WTC11 (cell line): ENCODE measurements at regions of chr1 and their contacts with region 1.

Region 1: GRCh38 chr1:153532769-153533599 is 2.8 kb downstream of the S100A6 start:
- DNase-seq: peak; percentile 94
- ATAC-seq: peak; percentile 85
- H3K4me3 Mint-ChIP-seq: peak overlapping the region; percentile 63
- H3K27ac Mint-ChIP-seq: peak overlapping the region; percentile 85
- H3K4me1 Mint-ChIP-seq: peaks cover 44% of the 10 kb centered on the region
- H3K27me3 Mint-ChIP-seq: peaks cover 37% of the 10 kb centered on the region
- CTCF ChIP-seq: peak; percentile 72

Region 2: DNA sequence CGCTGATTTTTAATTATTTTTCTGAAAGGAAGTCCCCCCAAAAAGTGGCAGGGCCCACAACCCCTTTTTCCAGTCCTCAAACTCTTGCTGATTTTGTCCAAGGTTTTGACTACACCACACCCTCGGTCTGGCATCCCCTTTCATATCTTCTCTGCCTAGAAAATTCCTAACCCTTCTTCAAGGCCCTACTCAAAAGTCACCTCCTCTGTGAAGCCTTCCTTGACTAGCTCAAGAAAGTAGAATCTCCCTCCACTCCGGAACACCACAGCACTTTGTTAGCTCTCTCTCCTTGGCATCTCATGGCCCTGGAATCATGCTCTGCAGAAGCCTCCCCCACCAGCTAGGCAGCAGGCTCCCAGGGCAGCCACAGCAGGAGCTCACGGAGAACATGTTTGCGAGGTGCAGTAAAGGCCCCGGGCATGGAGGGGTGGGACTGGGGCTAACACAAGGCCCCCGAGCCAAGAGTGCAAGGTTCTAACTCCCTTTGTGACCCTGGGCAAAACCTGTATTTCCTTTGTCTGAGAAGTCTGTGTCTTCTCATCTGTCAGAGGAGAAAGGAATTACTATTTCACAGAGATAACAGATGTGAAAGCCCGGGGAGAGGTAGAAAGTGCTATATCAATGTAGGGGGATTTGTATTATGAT is 54.8 kb before region 1 on chr1:
- CTCF ChIA-PET with region 1: no interaction called
- POLR2A ChIA-PET with region 1: no interaction called
- DNase-seq: no peak
- ATAC-seq: no peak
- H3K4me3 Mint-ChIP-seq: no peak overlapping the region
- H3K27ac Mint-ChIP-seq: no peak overlapping the region
- H3K4me1 Mint-ChIP-seq: no peaks in the 10 kb centered on the region
- H3K27me3 Mint-ChIP-seq: peaks cover under 1% of the 10 kb centered on the region; the same call in 1 of the 2 replicates
- CTCF ChIP-seq: no peak

Region 3: GRCh38 chr1:153510984-153511410 is 22.0 kb before region 1 on chr1:
- CTCF ChIA-PET with region 1: interaction called, 55 read pairs
- POLR2A ChIA-PET with region 1: interaction called, 4 read pairs
- DNase-seq: peak; percentile 93
- ATAC-seq: peak; percentile 96
- H3K4me3 Mint-ChIP-seq: no peak overlapping the region
- H3K27ac Mint-ChIP-seq: no peak overlapping the region
- H3K4me1 Mint-ChIP-seq: peaks cover 5% of the 10 kb centered on the region; the same call in 1 of the 2 replicates
- H3K27me3 Mint-ChIP-seq: peaks cover 38% of the 10 kb centered on the region
- CTCF ChIP-seq: peak; percentile 81

Region 4: GRCh38 chr1:153553830-153554541 is 21.0 kb after region 1 on chr1:
- CTCF ChIA-PET with region 1: interaction called, 52 read pairs
- POLR2A ChIA-PET with region 1: interaction called, 7 read pairs
- DNase-seq: no peak
- ATAC-seq: no peak
- H3K4me3 Mint-ChIP-seq: no peak overlapping the region
- H3K27ac Mint-ChIP-seq: no peak overlapping the region
- H3K4me1 Mint-ChIP-seq: peaks cover 20% of the 10 kb centered on the region
- H3K27me3 Mint-ChIP-seq: no peaks in the 10 kb centered on the region; the same call in 1 of the 2 replicates
- CTCF ChIP-seq: no peak

Region 5: DNA sequence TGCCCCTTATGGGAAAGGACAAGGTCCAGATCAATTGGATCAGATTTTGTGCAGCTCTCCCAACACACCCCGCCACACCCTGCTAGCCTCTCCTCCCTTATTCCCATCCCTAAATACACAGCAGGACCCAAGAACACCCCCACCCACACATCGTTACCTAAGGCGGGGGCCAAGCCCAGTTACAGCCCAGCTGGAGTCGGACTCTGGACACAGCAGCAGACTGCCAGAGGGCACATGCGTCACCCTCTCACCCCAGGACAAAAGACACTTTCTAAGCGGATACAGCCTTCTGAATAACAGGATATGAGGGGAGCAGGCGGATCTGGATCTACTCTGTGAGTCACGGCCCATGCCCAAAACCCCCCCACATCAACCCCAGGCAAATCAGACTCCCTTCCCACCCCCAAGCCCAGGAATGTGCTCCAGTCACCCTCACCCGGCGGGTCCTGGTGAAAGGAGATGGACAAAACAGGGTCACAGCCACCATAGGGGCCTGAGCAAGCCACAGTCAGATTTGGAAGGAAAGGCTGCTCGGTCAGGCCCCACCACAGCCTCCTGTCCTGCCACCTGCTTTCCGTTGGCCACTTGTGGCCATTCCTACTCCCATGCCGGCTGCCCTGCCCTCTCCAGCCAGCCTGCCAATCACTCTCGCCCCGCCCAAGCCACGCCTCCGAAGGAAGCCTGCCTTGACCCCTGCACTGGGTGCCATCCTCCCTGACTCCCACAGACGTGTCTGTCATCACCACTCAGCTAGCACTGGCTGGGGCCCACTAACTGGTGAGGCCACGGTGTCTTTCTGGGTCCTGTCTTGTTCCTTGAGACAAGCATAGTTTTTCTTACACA is 76.0 kb after region 1 on chr1:
- CTCF ChIA-PET with region 1: interaction called, 12 read pairs
- POLR2A ChIA-PET with region 1: no interaction called
- DNase-seq: peak; percentile 84
- ATAC-seq: peak; percentile 71
- H3K4me3 Mint-ChIP-seq: peak overlapping the region; percentile 29
- H3K27ac Mint-ChIP-seq: peak overlapping the region; percentile 90; the same call in 1 of the 2 replicates
- H3K4me1 Mint-ChIP-seq: peaks cover 64% of the 10 kb centered on the region
- H3K27me3 Mint-ChIP-seq: no peaks in the 10 kb centered on the region; the same call in 1 of the 2 replicates
- CTCF ChIP-seq: no peak

Region 6: DNA sequence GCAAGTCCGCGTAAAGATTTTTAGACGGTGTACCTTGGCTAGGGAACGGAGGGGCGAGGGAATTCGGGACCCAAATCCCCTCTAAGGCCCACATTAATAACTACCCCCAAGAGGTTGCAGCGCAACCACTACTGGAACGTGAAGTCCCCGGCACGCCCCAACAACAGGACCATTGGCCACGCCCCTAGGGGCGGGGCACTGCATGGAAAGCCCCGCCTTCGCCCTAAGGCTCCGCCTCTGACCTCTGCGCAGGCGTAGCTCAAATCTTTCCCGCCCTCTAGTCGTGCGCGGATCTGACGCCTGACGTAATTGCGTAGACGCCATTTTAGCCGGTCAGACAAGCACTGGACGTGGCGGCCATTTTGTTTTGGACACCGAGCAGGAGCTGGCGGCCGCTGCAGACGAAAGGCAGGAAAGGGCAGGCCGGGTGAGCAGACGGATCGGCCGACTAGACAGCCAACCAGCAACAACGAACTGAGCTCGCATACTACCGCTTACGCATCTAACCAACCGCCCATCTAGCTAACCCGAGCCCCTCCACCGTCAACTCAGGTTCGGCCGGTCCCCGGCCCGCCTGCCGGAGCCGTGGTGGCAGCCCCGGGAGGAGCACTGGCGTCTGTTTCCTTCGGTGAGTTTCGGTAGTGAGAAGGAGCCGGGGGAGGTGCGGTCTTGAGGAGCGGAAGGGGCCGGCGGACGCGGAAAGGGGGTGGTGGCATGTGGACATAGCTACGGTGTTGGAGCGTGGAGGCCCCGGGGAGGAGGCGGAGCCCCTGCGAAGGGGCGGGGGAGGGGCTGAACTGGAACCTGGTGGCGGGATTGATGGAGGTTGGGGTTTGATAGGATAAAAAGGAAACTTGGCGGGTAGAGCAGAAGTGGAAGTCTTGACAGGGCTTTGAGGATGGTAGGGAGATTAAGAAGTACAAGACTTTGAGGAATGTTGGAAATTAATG is 101.0 kb after region 1 on chr1 and contains the start of gene CHTOP:
- CTCF ChIA-PET with region 1: interaction called, 131 read pairs
- POLR2A ChIA-PET with region 1: no interaction called
- DNase-seq: peak; percentile 98
- ATAC-seq: peak; percentile 92
- H3K4me3 Mint-ChIP-seq: peak within 1 kb of the TSS; percentile 86
- H3K27ac Mint-ChIP-seq: peak within 1 kb of the TSS; percentile 100
- H3K4me1 Mint-ChIP-seq: peaks cover 22% of the 10 kb centered on the region
- H3K27me3 Mint-ChIP-seq: no peaks in the 10 kb centered on the region
- CTCF ChIP-seq: no peak
- total RNA-seq, gene CHTOP: 101 to 105 TPM (median 104 TPM) in 3 replicates